Activated CD4-positive, alpha-beta memory T cell treated with anti-CD3 and anti-CD28 coated beads, Interleukin-2, amount 10 ng/mL, durations not matched to agents 7 days and 5 days (primary cell): ENCODE measurements at regions of chr12 and their contacts with region 1.

Region 1: DNA sequence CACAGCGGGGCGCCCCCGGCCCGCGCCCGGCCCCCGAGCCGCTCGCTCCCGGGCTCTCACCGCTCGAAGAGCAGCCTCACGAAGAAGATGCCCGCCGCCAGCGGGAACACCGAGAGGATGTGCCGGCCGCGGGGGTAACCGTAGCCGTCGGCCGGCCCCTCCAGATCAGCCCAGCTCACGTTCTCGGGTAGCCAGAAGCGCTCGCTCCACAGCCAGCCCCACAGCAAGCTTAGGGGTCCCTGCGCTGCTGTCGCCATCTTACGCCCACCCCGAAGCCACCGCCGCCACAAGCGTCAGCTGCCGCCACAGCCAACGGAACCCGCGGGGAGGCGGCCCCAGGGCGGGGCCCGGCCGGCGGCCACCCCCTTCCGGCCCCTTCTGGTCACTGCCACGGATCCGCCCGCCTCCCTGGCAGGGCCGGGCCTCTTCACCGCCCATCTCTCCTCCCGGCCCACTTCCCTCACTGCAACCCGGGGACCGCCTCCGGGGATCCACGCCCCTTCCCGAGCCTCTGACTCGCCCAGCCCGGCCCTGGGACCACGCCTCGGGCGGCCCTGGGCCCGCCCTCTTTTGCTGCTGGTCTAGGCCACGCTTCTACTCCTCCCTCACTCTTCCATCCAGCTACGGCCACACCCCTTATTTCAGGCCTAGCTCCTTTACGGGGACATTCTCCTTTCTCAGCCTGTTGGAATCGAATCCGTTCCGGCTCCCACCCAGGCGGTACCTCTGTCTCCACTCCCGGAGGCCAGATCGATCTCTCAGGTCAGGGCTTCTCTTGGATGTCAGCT is at the start of gene CERS5:
- DNase-seq: peak; percentile 99
- H3K4me3 Mint-ChIP-seq: peak within 1 kb of the TSS; percentile 97
- H3K27ac Mint-ChIP-seq: peak within 1 kb of the TSS; percentile 89
- H3K4me1 Mint-ChIP-seq: peaks cover 31% of the 10 kb centered on the region
- H3K27me3 Mint-ChIP-seq: no peaks in the 10 kb centered on the region
- total RNA-seq, gene CERS5: 48.4 to 56.3 TPM

Region 2: DNA sequence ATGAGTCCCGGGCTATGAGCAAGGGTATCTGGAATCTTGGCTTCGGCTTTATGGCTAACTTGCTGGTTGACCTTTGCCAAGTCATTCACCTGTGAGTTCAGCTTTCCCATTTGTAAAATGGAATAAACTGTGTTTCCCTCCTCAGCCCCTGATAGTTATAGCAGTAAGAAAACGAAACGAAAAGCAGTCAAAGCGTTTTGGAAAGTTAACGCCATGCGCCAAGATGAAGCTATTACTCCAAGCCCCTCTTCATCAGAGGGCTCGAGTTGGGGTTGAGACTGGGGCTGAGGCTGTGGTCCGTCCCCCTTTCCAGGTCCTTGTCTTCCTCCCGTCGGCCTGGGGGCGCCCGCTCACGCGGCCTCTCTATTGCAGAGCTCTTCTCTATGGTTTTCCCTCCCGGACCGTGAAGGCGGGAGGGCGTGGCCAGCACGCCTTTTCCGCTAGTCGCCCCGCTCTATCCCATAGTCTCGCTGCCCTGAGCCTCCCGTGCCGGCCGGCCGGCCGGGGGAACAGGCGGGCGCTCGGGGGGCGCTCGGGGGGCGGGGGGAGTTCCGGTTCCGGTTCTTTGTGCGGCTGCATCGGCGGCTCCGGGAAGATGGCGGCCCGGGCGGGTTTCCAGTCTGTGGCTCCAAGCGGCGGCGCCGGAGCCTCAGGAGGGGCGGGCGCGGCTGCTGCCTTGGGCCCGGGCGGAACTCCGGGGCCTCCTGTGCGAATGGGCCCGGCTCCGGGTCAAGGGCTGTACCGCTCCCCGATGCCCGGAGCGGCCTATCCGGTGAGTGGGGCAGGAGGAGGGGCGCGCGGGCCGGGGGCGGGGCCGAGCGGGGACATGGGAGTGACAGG is 82.2 kb before region 1 on chr12 and contains the start of gene SMARCD1:
- CTCF ChIA-PET with region 1: interaction called, 5 read pairs
- POLR2A ChIA-PET with region 1: interaction called, 10 read pairs
- DNase-seq: peak; percentile 83
- H3K4me3 Mint-ChIP-seq: peak within 1 kb of the TSS; percentile 88
- H3K27ac Mint-ChIP-seq: peak within 1 kb of the TSS; percentile 88
- H3K4me1 Mint-ChIP-seq: peaks cover 41% of the 10 kb centered on the region
- H3K27me3 Mint-ChIP-seq: no peaks in the 10 kb centered on the region
- total RNA-seq, gene SMARCD1: 57.3 to 63.3 TPM

Region 3: GRCh38 chr12:50103767-50104321 is 63.4 kb before region 1 on chr12 and contains the start of gene GPD1:
- CTCF ChIA-PET with region 1: no interaction called
- POLR2A ChIA-PET with region 1: no interaction called
- DNase-seq: no peak
- H3K4me3 Mint-ChIP-seq: no peak within 1 kb of the TSS
- H3K27ac Mint-ChIP-seq: no peak within 1 kb of the TSS
- H3K4me1 Mint-ChIP-seq: peaks cover 3% of the 10 kb centered on the region
- H3K27me3 Mint-ChIP-seq: no peaks in the 10 kb centered on the region
- total RNA-seq, gene GPD1: 0.28 to 0.40 TPM

Region 4: DNA sequence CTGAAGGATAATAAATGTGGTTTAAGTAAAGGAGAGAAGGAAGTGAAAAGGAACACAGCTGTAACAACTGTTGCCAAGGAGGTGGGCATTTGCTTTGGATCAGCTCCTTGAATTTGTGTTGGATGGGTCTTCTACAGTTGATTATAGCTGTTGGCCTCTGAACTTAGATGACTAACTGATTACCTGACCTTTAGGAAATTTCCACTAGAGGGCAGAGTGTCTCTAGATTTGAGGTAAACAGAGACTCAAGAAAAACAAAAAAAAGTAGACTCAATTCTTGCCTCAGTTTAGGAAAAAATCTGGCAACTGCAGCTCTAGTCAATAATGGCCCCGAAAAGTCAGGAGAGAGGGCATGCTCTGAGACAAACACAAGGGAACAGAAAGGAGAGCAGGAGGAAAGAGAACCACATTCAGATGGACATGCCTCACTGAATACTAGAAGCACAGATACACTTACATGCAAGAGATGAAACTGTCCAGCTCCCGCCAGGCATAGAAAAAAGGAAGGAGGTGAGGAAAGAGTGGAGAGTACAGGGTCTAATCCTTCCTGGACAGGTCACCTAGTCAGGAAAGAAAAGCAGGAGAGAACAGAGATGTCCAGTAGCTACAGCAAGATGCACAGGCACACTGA is 34.6 kb before region 1 on chr12:
- CTCF ChIA-PET with region 1: interaction called, 11 read pairs
- POLR2A ChIA-PET with region 1: interaction called, 6 read pairs
- DNase-seq: no peak
- H3K4me3 Mint-ChIP-seq: no peak overlapping the region
- H3K27ac Mint-ChIP-seq: peak overlapping the region; percentile 30
- H3K4me1 Mint-ChIP-seq: peaks cover 7% of the 10 kb centered on the region
- H3K27me3 Mint-ChIP-seq: no peaks in the 10 kb centered on the region

Region 5: DNA sequence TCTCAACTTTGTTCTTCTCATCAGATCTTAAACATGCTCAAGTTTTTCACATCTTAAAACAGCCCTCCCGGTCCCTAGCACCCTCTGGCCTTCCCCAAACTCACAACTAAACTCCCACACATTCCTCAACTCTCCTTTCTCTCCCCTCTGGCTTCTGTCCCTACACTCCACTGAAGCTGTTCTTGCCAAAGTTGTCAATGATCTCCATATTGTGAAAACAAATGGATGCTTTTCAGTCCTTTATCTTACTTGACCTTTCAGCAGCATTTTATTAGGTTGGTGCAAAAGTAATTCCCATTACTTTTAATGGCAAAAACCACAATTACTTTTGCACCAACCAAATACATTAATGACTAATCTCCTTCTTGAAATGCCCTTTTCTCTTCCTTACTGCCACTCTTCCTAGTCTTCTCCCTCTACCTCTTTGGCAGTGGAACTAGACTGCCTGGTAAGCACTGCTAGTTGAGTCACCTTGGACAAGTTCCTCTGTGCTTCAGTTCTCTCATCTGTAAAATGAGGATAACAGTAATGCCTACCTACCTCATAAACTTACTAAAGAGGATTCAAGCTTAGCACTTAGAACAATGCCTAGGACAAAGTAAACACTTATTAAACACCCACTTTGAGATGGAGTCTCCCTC is 16.1 kb before region 1 on chr12:
- CTCF ChIA-PET with region 1: interaction called, 3 read pairs
- POLR2A ChIA-PET with region 1: interaction called, 12 read pairs
- DNase-seq: no peak
- H3K4me3 Mint-ChIP-seq: no peak overlapping the region
- H3K27ac Mint-ChIP-seq: no peak overlapping the region
- H3K4me1 Mint-ChIP-seq: peaks cover 16% of the 10 kb centered on the region
- H3K27me3 Mint-ChIP-seq: no peaks in the 10 kb centered on the region

Region 6: DNA sequence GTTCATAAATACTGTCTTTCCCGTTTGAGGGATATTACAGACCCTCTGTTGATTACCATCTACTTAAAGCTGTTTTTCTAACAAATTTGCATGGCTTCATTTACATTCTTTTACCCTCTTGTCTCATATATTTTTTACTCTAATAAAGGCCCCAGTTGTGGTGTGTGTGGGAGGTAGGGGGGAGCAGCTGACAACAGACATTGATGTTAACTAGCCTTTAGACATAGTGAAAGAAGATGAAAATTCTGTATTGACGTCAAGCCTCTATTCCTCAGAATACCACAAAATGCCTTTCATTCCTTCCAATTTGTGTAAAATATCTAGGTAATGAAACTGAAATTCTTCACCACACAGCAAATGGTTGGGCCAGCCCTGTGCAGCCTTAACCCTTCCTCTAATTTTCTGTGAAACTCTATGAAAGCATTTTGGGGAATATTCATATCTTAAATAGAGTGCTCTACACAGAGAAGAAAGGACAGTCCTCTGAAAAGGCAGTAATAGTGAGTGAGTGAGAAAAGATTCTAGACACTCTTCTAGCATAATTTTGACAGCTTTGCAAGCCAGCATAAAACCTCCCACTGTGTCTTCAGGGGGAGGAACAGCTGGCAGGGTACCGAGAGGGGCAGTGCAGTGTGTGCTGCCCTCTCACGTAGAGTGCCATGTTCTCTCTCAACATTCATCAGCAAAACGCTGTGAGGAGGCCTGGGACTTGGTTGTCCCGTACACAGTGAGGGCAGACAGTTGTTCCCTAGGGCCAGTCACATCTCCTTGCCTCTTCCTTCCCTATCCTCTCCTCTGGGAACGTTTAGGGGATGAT is 20.1 kb after region 1 on chr12:
- CTCF ChIA-PET with region 1: interaction called, 5 read pairs
- POLR2A ChIA-PET with region 1: interaction called, 26 read pairs
- DNase-seq: peak; percentile 33
- H3K4me3 Mint-ChIP-seq: no peak overlapping the region
- H3K27ac Mint-ChIP-seq: peak overlapping the region; percentile 82
- H3K4me1 Mint-ChIP-seq: peaks cover 63% of the 10 kb centered on the region
- H3K27me3 Mint-ChIP-seq: no peaks in the 10 kb centered on the region

Region 7: GRCh38 chr12:50283229-50283923 is 116.1 kb after region 1 on chr12 and contains the start of gene LIMA1:
- CTCF ChIA-PET with region 1: interaction called, 9 read pairs
- POLR2A ChIA-PET with region 1: interaction called, 13 read pairs
- DNase-seq: peak; percentile 93
- H3K4me3 Mint-ChIP-seq: peak within 1 kb of the TSS; percentile 89
- H3K27ac Mint-ChIP-seq: peak within 1 kb of the TSS; percentile 70
- H3K4me1 Mint-ChIP-seq: peaks cover 26% of the 10 kb centered on the region
- H3K27me3 Mint-ChIP-seq: peaks cover 13% of the 10 kb centered on the region
- total RNA-seq, gene LIMA1: 59.4 to 59.9 TPM